HEK293T (cell line): ENCODE measurements at regions of chr6 and their contacts with region 1.

Region 1: GRCh38 chr6:5670811-5671561 is 335.7 kb downstream of the NRN1 start:
- DNase-seq: no peak

Region 2: DNA sequence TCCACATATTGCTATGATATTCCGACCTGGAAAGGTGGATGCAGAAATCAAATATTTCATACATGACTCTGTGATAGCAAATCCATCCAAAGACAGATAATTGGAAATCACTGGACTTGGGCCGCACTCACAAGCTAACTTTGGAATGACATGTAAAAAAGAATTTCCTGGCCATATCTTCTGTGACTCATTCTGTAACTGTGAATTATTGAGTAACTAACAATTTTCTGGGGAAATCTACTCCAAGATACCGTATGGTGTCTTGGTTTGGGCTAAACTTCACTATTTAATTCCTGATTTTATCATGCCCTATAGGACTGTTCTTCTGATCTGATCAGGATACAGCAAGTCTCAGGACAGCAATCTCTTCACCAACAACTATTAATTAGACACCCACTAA is 824.9 kb after region 1 on chr6:
- CTCF ChIA-PET with region 1: interaction called, 10 read pairs
- POLR2A ChIA-PET with region 1: no interaction called
- DNase-seq: no peak